ENCODE measurements at regions of chr11 and their contacts with region 1.

Region 1: GRCh38 chr11:10307442-10308207 is 2.8 kb downstream of the ADM start:
- DNase-seq: peak; percentile 92
- ATAC-seq: peak; percentile 62

Region 2: DNA sequence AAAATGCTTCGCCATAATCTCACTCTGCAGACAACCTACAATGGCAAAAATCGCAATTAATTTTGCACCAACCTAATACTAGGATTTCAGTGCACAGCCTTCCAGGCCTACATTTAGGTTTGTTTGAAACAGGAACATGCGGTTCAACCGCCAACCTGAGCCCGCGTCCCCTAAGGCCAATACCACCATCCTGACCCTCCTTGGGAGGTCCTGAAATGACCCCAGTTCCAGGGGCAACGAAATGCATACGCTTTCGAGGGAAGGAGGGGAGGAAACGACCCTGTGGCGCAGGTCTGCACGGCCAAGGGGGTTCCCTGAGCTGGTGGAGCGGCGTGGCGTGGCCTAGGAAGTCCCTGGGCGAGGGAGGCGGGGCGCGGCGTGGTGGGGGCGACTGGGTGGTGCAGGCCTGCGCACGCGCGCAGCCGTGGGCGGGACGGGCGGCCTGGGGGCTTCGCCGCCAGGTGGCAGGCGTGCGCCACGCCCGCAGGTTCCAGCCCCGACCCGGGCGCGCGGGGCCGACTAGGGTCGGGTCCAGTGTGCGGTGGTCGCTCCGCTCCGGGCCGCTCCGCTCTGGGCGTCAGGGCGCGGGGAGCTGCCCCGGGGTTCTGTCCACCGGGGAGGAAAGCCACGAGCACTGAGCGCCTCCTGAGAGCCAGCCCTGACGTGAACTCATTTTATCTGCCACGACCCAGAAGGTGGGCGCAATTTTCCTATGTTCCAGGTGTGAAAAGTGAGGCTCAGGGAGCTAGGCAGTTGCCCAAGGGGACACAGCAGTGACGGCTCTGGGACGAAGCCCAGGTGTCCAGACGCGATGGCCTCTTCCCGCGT is 549.6 kb before region 1 on chr11:
- intact Hi-C with region 1: loop called (anchors 5 kb)
- DNase-seq: peak; percentile 93
- ATAC-seq: peak; percentile 80

Region 3: DNA sequence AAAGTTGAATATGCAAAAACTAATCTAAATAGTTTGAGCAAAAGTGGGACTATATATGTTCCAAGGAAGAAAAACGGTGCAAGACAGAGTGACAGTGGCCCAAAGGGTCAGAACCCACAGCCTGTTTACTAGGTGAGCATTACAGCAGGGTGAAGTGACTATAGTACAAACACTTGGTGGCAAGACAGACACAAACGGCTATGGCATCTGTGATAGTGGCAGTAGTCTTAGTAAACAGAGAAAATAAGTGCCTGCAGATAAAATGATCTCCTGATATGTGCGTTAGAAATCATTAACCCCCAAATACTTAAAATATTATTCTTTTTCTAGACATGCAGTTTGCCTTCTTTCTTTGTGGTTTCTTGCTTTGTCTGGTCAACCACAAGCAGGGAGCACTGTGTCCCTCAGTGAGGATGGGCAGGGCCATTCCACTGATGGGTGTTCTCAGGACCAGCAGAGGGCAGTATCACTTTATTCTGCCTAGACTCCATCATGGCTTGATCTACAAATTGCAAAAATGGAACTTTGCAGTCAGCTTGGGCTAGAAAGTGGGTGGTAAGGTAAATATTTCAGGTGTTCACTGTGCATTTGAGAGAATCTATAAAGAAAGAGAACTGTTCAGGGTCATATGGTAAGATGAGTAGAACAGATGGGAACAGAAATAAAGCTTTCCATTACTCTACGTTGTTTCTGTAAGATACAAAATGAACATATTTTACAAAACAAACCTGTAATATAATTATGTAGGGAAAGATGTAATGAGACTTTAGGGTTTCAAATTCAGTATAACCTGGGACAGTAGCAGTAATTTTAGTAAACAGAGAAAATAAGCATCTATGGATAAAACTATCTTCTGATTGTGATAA is 445.5 kb before region 1 on chr11:
- intact Hi-C with region 1: loop called (anchors 5 kb)
- DNase-seq: peak; percentile 39
- ATAC-seq: peak; percentile 85

Region 4: GRCh38 chr11:9972989-9973388 is 334.6 kb before region 1 on chr11:
- intact Hi-C with region 1: loop called (anchors 10 kb)
- DNase-seq: no peak
- ATAC-seq: peak; percentile 79

Region 5: DNA sequence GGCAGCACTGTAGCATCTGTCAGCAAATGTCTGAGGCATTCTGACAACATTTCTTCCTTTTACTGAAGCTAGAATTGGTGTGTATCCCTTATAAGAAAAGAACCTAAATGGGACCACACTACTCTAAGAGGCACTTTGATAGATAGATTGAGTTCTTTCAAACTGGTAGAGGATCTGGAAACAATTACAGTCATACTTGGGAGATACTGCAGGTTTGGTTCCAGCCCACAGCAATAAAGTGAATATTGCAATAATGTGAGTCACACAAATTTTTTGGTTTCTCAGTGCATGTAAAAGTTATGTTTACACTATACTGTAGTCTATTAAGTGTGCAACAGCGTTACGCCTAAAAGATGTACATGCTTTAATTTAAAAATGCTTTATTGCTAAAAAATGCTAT is 110.5 kb before region 1 on chr11:
- intact Hi-C with region 1: no loop called
- DNase-seq: no peak
- ATAC-seq: no peak

Region 6: DNA sequence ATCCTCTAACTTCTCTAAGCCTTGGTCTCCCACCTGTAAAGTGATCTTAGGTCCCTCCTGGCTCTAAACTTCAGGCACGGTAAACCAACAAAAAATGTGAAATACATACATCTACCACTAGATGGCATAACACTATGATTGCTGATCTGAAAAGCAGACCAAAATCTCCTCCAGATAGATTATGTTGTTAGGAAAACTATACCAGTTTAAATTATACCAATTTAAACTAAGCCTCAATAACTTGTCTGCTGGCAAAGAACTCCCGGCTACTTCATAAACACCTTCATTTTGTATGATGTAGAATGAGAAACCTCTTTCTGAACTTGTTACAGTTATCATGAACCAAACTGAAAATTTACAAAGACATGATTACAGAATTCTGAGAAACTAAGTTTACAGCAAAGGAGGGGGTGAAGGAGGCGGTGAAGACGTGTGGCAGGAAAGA is 99.5 kb before region 1 on chr11:
- intact Hi-C with region 1: loop called (anchors 5 kb)
- DNase-seq: no peak
- ATAC-seq: peak; percentile 68

Measured in Right ventricle myocardium superior (tissue), 1 donor.